Thyroid gland (tissue), 4 donors: ENCODE measurements at regions of chr1 and their contacts with region 1.

Region 1: DNA sequence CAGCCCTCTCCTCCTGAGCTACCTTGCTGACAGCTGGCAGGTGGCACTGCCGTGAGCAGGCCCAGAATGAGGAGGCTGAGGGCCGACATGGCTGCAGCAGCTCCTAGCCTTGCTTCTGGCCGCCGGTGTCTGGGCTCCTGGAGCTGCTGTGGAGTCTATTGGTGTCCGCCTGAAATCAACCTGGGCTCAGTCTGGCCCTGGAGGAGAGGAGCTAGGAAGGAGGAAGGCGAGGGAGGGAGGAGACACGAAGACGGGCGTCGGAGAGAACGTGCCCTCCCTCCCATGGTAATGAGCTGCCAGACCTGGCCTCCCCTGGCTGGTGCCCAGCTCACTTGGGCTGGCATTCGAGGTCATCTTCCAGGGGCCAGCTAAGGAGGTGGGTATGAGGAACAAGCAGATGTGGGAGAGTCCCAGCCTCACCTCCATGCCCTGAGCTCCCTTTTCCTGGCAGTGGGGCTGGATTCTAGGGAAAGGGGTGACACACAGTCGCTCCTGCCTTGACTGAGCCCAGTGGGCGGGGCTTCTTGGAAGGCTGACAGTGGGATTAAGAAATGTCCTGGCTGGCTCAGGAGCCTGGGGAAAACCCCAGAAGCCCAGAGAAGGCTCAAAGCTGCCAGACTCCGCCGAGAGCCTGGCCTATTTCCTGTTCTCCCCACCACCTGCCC is at the start of gene PDZK1IP1:
- DNase-seq: peak; percentile 23 to 56
- H3K4me3 ChIP-seq: no peak within 1 kb of the TSS
- H3K27ac ChIP-seq: peak within 1 kb of the TSS in 1 of 3 donors; percentile 17
- H3K4me1 ChIP-seq: peaks cover 0 to 12% of the 10 kb centered on the region in 2 donors
- H3K27me3 ChIP-seq: no peaks in the 10 kb centered on the region
- CTCF ChIP-seq: no peak
- POLR2A ChIP-seq: no peak
- total RNA-seq, gene PDZK1IP1: 0.83 to 3.0 TPM in 2 of 4 donors, not detected in the others

Region 2: DNA sequence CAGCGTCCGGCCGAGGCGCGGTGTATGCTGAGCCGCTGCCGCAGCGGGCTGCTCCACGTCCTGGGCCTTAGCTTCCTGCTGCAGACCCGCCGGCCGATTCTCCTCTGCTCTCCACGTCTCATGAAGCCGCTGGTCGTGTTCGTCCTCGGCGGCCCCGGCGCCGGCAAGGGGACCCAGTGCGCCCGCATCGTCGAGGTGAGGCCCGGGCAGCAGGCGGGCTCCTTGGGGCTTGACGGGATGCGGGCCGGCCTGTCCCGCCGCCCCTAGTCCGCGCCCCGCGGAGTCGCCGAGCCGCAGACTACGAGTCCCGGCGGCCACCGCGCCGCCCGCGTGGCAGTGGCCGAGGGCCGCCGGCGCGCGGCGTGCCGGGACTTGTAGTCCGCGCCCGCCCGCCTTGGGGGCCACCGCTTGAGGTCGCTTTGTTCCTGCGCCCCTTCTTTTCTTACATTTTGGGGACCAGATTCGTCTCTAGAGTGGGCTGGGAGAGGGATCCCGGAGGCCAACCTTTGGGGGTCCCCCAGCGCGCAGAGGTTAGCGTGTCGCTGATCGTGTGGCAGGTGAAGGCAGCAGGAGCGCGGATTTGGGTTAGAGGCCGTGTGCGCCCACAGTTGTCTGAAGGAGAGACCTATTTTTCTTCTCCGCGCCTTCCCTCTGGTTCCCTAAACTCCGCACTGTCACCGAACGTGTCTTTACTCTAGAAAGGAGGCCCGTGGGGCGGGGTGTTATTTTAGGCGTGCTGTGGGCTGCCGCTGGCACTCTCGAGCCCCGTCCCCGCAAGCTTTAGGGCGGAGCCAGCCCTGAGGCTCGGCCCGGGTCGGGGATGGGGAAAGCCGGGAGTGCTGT is 144.2 kb after region 1 on chr1:
- intact Hi-C with region 1: loop called (anchors 10 kb)
- DNase-seq: peak; percentile 76
- H3K4me3 ChIP-seq: peak overlapping the region; percentile 77 to 91 (median 84)
- H3K27ac ChIP-seq: peak overlapping the region; percentile 86 to 98 (median 95)
- H3K4me1 ChIP-seq: peaks cover 9 to 35% of the 10 kb centered on the region in 2 donors
- H3K27me3 ChIP-seq: no peaks in the 10 kb centered on the region
- CTCF ChIP-seq: peak in 1 of 6 experiments; percentile 40
- POLR2A ChIP-seq: peak; percentile 11 to 48

Region 3: GRCh38 chr1:47437447-47438164 is 247.6 kb after region 1 on chr1 and contains the start of gene FOXD2:
- intact Hi-C with region 1: loop called (anchors 10 kb)
- DNase-seq: peak; percentile 81 to 83
- H3K4me3 ChIP-seq: peak within 1 kb of the TSS; percentile 43 to 80 (median 80)
- H3K27ac ChIP-seq: peak within 1 kb of the TSS; percentile 42 to 76 (median 70)
- H3K4me1 ChIP-seq: peaks cover 17 to 34% of the 10 kb centered on the region in 2 donors
- H3K27me3 ChIP-seq: peaks cover 26% of the 10 kb centered on the region
- CTCF ChIP-seq: peak; percentile 87 to 100 (median 99)
- POLR2A ChIP-seq: peak in 1 of 2 donors; percentile 38
- total RNA-seq, gene FOXD2: 0.11 to 0.54 TPM in 2 of 4 donors, not detected in the others

Region 4: DNA sequence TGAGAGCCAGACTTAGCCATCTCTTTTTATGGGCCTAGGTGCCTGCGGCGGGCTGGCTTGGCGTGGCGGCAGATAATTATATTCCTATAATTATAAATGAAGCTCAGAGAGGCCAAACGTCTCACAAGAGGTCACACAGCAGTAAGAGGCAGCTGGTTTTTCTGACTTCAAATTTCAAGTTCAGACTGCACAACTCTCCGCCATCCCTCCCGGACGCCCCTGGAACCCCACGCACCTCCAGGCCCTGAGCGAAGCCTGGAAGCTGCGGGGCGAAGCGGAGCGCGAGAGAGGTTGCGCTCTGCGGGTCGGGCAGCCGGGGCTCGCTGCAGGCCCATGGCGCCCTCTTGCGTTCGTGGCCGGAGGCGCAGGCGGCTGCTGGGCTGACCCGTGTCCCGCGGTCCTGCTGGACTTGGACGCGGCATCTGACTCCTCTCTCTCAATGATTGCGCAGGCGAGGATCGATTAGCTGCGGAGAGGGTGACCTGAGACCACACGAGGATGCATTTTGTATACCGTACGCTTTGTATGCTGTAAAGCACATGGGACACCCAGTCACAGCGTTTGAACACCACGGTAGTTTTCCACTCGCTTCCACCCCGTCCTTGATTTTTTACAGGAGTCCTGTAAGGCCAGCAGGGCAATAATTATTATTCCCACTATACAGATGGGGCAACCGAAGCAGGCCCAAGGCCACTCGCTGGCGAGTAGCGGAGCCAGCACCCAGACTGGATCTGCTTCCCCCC is 520.5 kb after region 1 on chr1:
- intact Hi-C with region 1: loop called (anchors 10 kb)
- DNase-seq: peak; percentile 70 to 71
- H3K4me3 ChIP-seq: no peak overlapping the region
- H3K27ac ChIP-seq: no peak overlapping the region
- H3K4me1 ChIP-seq: peaks cover 13 to 23% of the 10 kb centered on the region in 2 donors
- H3K27me3 ChIP-seq: peaks cover 35% of the 10 kb centered on the region
- CTCF ChIP-seq: peak in 5 of 6 experiments; percentile 74 to 94 (median 91)
- POLR2A ChIP-seq: no peak